ENCODE measurements at regions of chr19 and their contacts with region 1.

Region 1: DNA sequence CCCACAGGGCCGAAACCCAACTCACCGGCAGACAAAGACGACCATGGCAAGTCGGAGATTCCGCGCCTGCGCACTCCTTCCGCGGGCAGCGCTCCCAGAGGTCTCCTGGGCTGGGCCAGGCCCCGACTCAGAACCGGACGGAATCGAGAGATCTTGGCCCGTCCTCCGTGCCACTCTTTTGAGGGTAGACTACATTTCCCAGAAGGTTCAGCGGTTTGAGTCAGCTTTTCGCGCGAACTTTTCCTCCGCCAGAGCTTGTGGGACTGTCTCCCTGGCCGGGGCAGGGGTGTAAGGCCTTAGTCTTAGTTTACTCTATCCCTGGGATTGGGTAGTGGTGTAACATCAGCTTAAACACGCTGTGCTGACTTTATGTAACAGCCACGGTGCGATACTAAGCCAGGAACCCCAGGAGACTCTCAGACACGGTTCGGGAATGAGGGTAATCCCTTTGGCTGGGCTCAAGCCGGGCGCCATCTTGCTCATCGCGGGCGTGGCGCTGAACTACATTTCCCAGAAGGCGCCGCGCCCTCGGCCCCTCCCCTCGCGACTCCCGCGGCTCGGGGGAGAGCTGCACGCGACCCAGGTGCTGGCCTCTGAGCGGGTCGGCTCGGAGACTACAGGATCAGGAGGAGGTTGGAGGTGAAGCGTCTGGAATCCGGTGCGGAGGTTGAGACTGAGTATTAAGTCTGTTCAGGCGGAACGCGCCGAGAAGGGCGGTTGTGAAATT is at the start of gene ZNF260:
- DNase-seq: peak; percentile 96 to 98 (median 97)
- H3K4me3 ChIP-seq: peak within 1 kb of the TSS; percentile 57 to 100 (median 82)
- H3K27ac ChIP-seq: peak within 1 kb of the TSS; percentile 87 to 100 (median 97)
- H3K27me3 ChIP-seq: no peaks in the 10 kb centered on the region
- CTCF ChIP-seq: peak in 14 of 56 donors; percentile 5 to 49 (median 16)
- total RNA-seq, gene ZNF260: 10.1 to 24.3 (median 14.8) TPM

Region 2: DNA sequence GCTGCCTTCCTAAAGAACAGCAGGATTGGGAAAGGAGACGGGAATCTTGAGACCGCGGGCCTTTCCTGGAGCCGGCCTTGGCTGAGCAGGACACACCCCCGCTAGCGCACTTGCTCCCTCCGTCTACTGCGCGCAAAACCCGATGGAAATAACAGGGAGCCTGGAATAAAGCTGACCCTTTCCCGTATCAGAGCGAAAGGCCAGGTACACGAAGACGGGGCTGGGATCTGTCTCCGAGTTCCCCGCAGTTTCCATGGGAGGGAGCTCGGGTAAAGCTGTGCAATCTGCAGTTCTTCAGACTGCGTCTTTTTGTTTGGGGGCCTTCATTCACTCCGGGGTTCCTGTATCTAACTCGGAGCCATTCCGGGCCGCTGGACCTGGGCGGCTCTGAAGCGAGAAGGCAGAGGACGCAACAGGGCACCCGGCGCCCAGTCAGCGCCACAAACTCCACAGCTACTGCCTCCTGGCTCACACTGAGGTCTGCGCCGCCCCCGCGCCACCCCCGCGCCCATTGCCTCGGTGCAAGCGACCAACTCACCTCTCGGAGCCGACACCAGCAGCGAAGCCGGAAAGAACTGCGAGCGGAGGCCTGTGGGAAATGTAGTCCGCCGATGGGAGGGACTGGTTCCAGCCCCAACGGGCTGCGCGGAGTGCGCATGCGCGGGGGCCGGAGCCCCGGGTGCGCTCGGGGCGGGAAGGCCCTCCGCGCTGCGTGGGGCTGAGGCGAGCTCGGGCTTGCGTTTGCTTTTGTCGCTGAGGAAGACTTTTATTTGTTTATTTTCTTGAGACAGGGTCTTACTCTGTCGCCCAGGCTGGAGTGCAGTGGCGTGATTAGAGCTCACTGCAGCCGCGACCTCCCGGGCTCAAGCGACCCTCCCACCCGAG is 149.5 kb before region 1 on chr19 and contains the start of gene ZFP14:
- intact Hi-C with region 1: no loop called
- DNase-seq: peak; percentile 91 to 97 (median 95)
- H3K4me3 ChIP-seq: peak within 1 kb of the TSS; percentile 66 to 96 (median 86)
- H3K27ac ChIP-seq: peak within 1 kb of the TSS; percentile 49 to 97 (median 88)
- H3K27me3 ChIP-seq: no peaks in the 10 kb centered on the region
- CTCF ChIP-seq: peak in 35 of 56 donors; percentile 7 to 63 (median 33)
- total RNA-seq, gene ZFP14: 12.3 to 23.4 (median 16.5) TPM

Region 3: DNA sequence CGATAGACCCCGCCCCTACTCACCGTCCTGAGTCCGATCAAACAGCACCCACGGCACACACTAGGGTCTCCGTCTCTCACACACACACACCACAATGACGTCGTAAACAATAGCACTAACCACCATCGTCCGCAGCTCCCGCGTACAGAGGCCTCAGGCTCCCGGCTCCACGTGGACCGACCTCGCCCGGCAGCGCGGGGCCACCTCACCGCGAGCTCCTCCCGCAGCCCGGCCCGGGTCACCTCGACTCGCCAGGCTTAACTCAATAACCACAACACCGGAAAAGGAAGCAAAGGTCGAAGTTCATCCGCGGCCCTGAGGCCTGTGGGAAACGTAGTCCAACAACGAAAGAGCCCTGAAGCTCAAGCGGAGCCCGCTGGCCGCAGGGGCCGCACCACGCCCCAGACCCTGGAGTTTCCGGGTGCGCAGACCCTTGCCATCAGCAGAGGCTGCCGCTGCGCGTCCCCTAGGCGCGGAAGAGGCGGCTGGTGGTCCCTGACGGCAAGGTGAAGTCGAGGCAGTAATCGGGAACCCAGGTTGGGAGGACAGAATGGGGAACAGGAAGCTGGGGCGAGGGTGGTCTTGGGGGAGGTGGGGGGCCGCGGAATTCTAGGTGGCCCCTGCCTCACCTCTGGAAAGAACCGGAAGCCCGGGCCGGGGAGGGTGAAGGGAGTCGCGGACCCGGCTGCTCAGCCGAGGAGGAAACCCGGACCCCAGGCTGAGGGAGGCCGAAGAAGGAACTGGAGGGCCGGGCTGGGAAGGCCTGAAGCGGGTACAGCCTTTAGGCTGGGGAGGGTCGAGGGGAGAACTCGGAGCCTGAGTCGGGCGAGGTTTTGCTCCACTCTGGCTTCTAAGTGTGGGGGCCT is 44.9 kb after region 1 on chr19 and contains the start of gene ZNF529:
- intact Hi-C with region 1: loop called (anchors 5 kb)
- DNase-seq: peak; percentile 86 to 96 (median 93)
- H3K4me3 ChIP-seq: peak within 1 kb of the TSS; percentile 52 to 100 (median 89)
- H3K27ac ChIP-seq: peak within 1 kb of the TSS in 56 of 59 donors; percentile 1 to 90 (median 68)
- H3K27me3 ChIP-seq: no peaks in the 10 kb centered on the region
- CTCF ChIP-seq: peak in 7 of 56 donors; percentile 10 to 25 (median 14)
- total RNA-seq, gene ZNF529: 23.6 to 57.4 (median 38.0) TPM

Region 4: GRCh38 chr19:36687214-36688056 is 159.1 kb after region 1 on chr19 and contains the start of gene ZNF567:
- intact Hi-C with region 1: loop called in 1 of 2 experiments (anchors 1 kb)
- DNase-seq: peak; percentile 96 to 99 (median 98)
- H3K4me3 ChIP-seq: peak within 1 kb of the TSS; percentile 63 to 100 (median 93)
- H3K27ac ChIP-seq: peak within 1 kb of the TSS in 52 of 59 donors; percentile 2 to 87 (median 62)
- H3K27me3 ChIP-seq: no peaks in the 10 kb centered on the region
- CTCF ChIP-seq: peak in 24 of 56 donors; percentile 12 to 54 (median 28)
- total RNA-seq, gene ZNF567: 5.6 to 15.0 (median 8.9) TPM

Region 5: DNA sequence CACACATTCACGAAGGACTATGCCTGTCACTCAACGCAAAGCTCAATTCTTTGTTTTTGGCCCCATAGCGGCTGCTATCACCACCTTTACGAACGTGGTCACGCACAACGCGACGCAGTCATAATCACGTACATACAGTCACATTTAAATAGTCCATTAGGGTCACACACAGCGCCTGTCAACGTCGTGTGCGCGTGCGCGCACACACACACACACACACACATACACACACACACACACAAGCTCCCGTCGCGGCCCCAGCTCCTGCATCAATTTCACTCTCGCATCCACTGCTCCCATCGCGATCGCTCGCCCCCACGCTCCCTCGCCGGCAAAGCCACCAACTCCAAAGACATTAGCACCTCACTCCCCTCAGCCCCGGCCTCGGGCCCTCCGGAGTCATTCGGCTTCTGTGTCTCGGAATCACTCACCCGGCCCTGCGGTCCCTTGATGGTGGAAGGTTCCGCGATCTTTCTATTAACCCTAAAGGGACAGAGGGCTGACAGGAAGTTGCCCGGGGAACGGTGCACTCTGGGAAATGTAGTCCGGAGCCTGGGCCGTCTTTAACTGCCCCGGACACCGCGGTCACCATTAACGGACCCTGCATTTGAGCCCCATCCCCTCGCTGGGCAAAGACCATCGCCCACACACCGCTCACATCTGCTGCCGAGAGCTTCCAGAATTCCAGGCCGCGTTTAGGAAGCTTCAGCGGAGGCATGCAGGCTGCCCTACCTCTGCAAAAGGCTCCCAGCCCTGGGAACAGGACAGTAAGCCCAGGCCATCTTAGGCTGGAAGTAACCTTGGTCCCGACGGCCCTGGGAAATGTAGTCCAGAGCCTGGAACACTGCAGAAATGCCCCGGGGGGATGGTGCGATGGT is 309.8 kb after region 1 on chr19 and contains the start of gene ZNF790:
- intact Hi-C with region 1: loop called in 1 of 2 experiments (anchors 10 kb)
- DNase-seq: peak; percentile 87 to 95 (median 93)
- H3K4me3 ChIP-seq: peak within 1 kb of the TSS; percentile 65 to 99 (median 82)
- H3K27ac ChIP-seq: peak within 1 kb of the TSS; percentile 79 to 99 (median 94)
- H3K27me3 ChIP-seq: no peaks in the 10 kb centered on the region
- CTCF ChIP-seq: peak in 7 of 56 donors; percentile 13 to 28 (median 17)
- total RNA-seq, gene ZNF790: 8.6 to 21.8 (median 12.8) TPM

Measured in dorsolateral prefrontal cortex (tissue), 120 donors.